H1 (cell line): ENCODE measurements at regions of chr6 and their contacts with region 1.

Region 1: DNA sequence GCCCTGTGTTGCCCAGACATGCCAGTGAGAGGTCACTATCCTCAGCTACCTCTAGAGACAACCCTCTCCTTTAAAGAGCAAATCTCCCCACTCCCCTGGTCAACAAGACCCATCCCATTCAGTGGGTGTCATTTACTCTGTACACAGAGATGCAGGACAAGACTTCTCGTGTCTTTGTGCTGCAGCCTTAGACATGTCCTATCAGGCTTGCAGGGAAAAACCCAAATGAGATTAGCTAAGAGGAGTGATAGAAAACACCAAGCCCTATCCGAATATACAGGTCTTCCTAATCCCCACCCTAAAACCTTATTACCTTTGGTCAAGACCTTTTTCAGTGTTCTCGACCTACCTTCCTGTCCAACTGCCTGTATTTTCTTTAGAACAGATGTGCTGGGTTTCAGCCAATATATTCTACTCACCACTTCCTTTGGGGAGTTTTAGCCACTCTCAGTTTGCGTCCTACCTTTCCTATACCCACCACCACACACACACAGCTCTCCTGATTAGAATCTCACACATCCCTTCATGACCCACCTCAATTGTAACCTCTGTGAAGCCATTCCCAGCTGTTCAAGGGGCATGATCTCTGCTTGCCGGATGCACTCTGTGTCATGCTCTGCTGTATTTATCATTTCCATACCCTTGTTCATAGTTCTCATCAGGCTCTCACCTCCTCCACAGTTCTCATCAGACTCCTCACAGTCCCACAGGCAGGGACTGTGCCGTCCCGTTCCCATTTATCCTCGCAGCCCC is 39.7 kb downstream of the TRAM2 start:
- DNase-seq: no peak
- H3K4me3 ChIP-seq: no peak overlapping the region
- H3K27ac ChIP-seq: no peak overlapping the region
- H3K4me1 ChIP-seq: peaks cover 2 to 11% (median 7%) of the 10 kb centered on the region in 4 experiments; a peak in 5 of 7 replicates
- H3K27me3 ChIP-seq: no peaks in the 10 kb centered on the region
- CTCF ChIP-seq: no peak
- EP300 ChIP-seq: no peak
- POLR2A ChIP-seq: no peak
- RAD21 ChIP-seq: no peak

Region 2: GRCh38 chr6:52522655-52523054 is 14.5 kb before region 1 on chr6:
- CTCF ChIA-PET with region 1: interaction called, 15 read pairs
- POLR2A ChIA-PET with region 1: interaction called, 5 read pairs
- DNase-seq: no peak
- H3K4me3 ChIP-seq: no peak overlapping the region
- H3K27ac ChIP-seq: no peak overlapping the region
- H3K4me1 ChIP-seq: peaks cover 7 to 14% (median 11%) of the 10 kb centered on the region in 4 experiments
- H3K27me3 ChIP-seq: no peaks in the 10 kb centered on the region
- CTCF ChIP-seq: no peak
- EP300 ChIP-seq: no peak
- POLR2A ChIP-seq: no peak
- RAD21 ChIP-seq: no peak

Region 3: DNA sequence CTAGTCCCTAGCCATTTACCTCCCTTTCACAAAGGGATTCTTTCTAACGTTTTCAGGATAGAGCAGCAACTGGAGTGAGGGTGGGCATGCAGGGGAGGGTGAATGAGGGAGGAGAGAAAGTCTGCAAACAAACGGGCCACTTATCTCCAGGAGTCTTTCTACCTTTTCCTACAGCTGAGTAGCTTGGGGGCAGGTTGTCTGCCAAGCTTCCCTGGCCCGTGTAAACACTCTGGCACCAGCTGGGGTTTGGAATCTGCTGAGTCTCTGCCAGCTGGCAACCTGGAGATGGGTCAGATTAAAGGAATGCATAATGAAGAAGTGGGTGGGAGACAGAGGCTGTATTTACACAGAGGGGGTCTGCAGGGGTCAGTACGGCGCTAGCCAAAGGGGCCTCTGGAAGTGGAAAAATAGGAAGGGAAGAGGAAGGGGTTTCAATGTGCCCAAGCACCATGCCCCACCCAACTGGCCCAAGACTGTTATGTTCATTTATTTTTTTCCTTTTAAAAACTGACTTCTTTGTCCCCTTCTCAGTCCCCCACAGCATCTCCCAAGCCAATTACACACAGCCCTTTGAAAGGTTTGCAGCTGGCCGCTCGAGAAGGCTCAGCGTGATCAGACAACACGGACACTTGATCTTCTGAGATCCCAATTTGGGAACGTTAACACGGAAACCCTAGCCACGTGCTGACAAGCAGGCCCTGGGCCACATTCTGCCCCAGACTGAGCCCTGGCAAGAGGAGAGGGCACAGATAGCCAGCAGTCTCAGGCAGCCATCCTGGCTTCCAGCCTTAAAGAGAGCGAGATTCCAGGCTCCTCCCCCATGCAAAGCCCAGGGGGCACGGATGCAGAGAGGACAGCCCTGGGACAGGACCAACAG is 14.5 kb after region 1 on chr6:
- CTCF ChIA-PET with region 1: interaction called, 49 read pairs
- POLR2A ChIA-PET with region 1: interaction called, 4 read pairs
- DNase-seq: peak in 1 of 2 experiments; percentile 70
- H3K4me3 ChIP-seq: peak overlapping the region in 3 of 4 experiments; percentile 10 to 43 (median 23); a peak in 4 of 8 replicates
- H3K27ac ChIP-seq: peak overlapping the region; percentile 40; the same call in 1 of the 2 replicates
- H3K4me1 ChIP-seq: peaks cover 11 to 17% (median 12%) of the 10 kb centered on the region in 4 experiments
- H3K27me3 ChIP-seq: no peaks in the 10 kb centered on the region
- CTCF ChIP-seq: peak in 1 of 3 experiments; percentile 4; a peak in 2 of 4 replicates
- EP300 ChIP-seq: no peak
- POLR2A ChIP-seq: no peak
- RAD21 ChIP-seq: peak; percentile 37 to 47; a peak in 2 of 4 replicates

Region 4: GRCh38 chr6:52675372-52675771 is 138.2 kb after region 1 on chr6:
- CTCF ChIA-PET with region 1: no interaction called
- POLR2A ChIA-PET with region 1: no interaction called
- DNase-seq: no peak
- H3K4me3 ChIP-seq: no peak overlapping the region
- H3K27ac ChIP-seq: no peak overlapping the region
- H3K4me1 ChIP-seq: peaks cover 0 to 9% (median 4%) of the 10 kb centered on the region in 4 experiments; a peak in 6 of 7 replicates
- H3K27me3 ChIP-seq: peaks cover 0 to 3% (median 0%) of the 10 kb centered on the region in 4 experiments; a peak in 2 of 7 replicates
- CTCF ChIP-seq: no peak
- EP300 ChIP-seq: no peak
- POLR2A ChIP-seq: no peak
- RAD21 ChIP-seq: no peak